Astrocyte of the cerebellum (primary cell): ENCODE measurements at regions of chr2 and their contacts with region 1.

Region 1: GRCh38 chr2:44912660-44913059 is 28.8 kb upstream of the SIX3 start:
- DNase-seq: no peak
- H3K4me3 ChIP-seq: no peak overlapping the region
- CTCF ChIP-seq: no peak

Region 2: DNA sequence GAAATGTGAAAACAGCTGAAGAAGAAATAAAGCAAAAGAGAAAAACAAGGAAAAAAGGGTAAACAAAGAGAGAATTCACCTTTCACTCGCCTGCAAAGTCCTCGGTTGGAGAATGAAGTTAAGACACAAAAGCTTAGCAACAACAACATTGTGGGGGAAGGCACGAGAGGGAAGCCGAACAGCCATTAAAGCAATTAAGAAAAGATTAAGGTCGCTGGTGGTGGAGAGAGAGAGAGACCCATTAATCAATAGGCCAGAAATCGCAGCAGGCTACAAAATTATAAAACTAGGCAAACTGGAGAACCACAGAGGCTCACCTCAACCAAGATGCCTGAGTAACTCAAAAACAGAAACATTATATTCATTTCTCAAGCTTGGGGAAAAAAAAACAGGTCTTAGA is 91.2 kb before region 1 on chr2:
- in situ Hi-C with region 1: loop called (anchors 5 kb)
- DNase-seq: no peak
- H3K4me3 ChIP-seq: no peak overlapping the region
- CTCF ChIP-seq: no peak

Region 3: GRCh38 chr2:45009303-45009927 is 96.8 kb after region 1 on chr2 and contains the start of gene SIX2:
- in situ Hi-C with region 1: no loop called
- DNase-seq: peak; percentile 77
- H3K4me3 ChIP-seq: peak within 1 kb of the TSS; percentile 41
- CTCF ChIP-seq: no peak

Region 4: GRCh38 chr2:45412754-45413379 is 500.2 kb after region 1 on chr2:
- in situ Hi-C with region 1: no loop called
- DNase-seq: no peak
- H3K4me3 ChIP-seq: no peak overlapping the region
- CTCF ChIP-seq: no peak